Calu3 (cell line): ENCODE measurements at regions of chr1 and their contacts with region 1.

Region 1: DNA sequence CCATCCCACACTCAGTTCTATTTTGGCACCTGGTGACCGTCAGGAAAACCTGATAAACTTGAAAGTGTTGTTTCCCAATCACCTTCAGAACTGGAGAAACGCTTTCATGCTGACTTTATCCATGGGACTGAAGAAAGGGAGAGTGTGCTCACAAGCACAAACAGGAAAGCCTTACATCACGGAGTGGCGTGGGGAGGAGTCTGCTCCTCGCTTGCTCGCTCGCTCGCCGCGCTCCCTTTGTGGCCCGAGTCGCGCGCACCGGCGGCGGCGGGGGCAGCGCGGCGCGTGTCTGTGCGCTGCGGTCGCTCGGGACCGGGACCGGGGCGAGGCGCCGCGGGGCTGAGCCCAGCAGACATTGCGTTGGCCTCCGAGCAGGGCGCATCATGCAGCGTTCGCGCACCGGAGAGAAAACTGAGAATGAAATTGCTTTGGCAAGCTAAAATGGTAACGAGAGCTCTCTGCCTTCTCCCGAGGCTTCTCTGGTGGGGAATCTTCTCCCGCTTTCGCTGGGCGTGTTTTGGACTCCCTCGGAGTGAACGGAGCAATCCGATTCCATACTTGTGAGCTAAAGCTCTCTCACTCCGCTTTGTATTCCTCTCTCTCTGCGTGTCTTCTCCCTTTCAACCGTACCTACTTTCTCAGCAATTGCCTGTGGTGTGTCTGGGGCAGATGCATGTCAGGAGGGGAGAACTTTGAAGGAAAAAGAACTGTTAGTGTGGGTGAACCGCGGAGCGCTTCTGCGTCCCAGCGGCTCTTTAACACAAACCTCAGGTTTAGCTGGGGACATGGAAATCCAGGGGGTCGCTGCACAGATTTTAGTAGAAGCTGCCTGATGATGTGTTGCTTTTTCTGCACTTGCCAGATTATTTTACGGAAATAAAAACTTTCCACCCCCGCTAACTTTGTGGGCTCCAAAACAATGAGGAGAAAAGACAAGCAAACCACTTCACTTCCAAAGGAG is at the start of gene RGL1:
- DNase-seq: peak; percentile 64
- H3K4me3 Mint-ChIP-seq: peak within 1 kb of the TSS; percentile 83
- H3K27ac Mint-ChIP-seq: peak within 1 kb of the TSS; percentile 32
- H3K4me1 Mint-ChIP-seq: no peaks in the 10 kb centered on the region
- H3K27me3 Mint-ChIP-seq: no peaks in the 10 kb centered on the region
- CTCF ChIP-seq: no peak
- total RNA-seq, gene RGL1: 2.7 and 4.8 TPM in 2 replicates

Region 2: GRCh38 chr1:183881387-183882131 is 76.4 kb after region 1 on chr1:
- CTCF ChIA-PET with region 1: no interaction called
- intact Hi-C with region 1: loop called (anchors 5 kb)
- DNase-seq: peak; percentile 96
- H3K4me3 Mint-ChIP-seq: peak overlapping the region; percentile 54
- H3K27ac Mint-ChIP-seq: peak overlapping the region; percentile 97
- H3K4me1 Mint-ChIP-seq: peaks cover 83% of the 10 kb centered on the region
- H3K27me3 Mint-ChIP-seq: no peaks in the 10 kb centered on the region
- CTCF ChIP-seq: no peak

Region 3: GRCh38 chr1:183915625-183916510 is 110.7 kb after region 1 on chr1:
- CTCF ChIA-PET with region 1: no interaction called
- intact Hi-C with region 1: loop called (anchors 10 kb)
- DNase-seq: peak; percentile 87
- H3K4me3 Mint-ChIP-seq: no peak overlapping the region
- H3K27ac Mint-ChIP-seq: peak overlapping the region; percentile 3
- H3K4me1 Mint-ChIP-seq: peaks cover 24% of the 10 kb centered on the region
- H3K27me3 Mint-ChIP-seq: no peaks in the 10 kb centered on the region
- CTCF ChIP-seq: peak; percentile 81